ENCODE measurements at regions of chr2 and their contacts with region 1.

Region 1: GRCh38 chr2:223101340-223102039 is 49.5 kb downstream of the KCNE4 start:
- DNase-seq: no peak

Region 2: GRCh38 chr2:222973237-222973636 is 128.3 kb before region 1 on chr2:
- intact Hi-C with region 1: loop called in 1 of 2 experiments (anchors 5 kb)
- DNase-seq: no peak